ENCODE measurements at regions of chr16 and their contacts with region 1.

Region 1: DNA sequence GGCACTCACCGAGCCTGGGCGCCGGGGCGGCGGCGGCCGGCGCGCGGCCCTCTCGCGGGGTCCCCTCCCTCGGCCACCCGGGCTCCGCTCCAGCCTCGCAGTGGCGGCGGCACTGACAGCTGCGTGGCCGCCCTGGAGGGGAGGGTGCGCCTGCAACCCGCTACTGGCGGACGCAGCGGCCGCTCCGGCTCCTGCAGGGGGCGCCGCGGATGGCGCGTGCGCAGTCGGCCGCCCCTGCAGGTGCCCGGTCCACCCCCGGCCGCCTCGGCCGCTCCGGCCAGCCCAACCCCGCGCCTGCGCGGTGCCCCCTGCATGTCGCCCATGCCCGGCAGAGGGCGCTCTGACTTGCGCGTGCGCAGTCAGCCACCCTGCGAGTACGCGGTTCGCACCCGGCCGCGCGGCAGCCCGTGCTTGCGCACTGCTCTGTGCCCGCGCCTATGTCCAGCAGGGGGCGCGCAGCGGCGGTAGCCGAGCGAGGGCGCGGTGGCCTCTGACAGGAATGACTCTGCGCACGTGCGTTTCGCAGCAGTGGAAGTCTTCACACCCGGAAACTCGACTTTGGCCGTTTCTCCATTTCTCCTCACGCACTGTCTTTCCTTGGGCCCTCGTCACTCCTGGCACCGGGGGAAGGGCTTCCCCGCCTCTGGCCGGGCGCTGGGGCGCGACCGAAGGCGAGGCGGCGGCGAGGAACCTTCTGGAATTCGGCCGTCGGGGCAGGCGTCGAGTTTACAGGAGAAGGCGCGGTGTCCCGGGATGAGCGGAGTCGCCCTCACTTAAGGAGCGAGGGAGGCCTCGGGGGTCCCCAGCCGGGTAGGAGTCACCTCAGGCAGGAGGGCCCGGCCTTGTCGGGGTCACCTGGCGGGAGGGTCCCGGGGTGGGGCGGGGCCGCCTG is at the start of gene ABCA3:
- DNase-seq: peak; percentile 100
- H3K4me3 Mint-ChIP-seq: peak within 1 kb of the TSS; percentile 93
- H3K27ac Mint-ChIP-seq: peak within 1 kb of the TSS; percentile 82
- H3K4me1 Mint-ChIP-seq: peaks cover 16% of the 10 kb centered on the region
- H3K27me3 Mint-ChIP-seq: peaks cover 32% of the 10 kb centered on the region
- total RNA-seq, gene ABCA3: 8.3 and 9.2 TPM in 2 replicates

Region 2: GRCh38 chr16:2422123-2422867 is 81.5 kb after region 1 on chr16:
- intact Hi-C with region 1: loop called (anchors 2 kb)
- DNase-seq: no peak
- H3K4me3 Mint-ChIP-seq: no peak overlapping the region
- H3K27ac Mint-ChIP-seq: no peak overlapping the region
- H3K4me1 Mint-ChIP-seq: peaks cover 6% of the 10 kb centered on the region
- H3K27me3 Mint-ChIP-seq: peaks cover 6% of the 10 kb centered on the region

Region 3: GRCh38 chr16:2486645-2487516 is 146.1 kb after region 1 on chr16:
- intact Hi-C with region 1: loop called (anchors 5 kb)
- DNase-seq: peak; percentile 90
- H3K4me3 Mint-ChIP-seq: peak overlapping the region; percentile 65
- H3K27ac Mint-ChIP-seq: peak overlapping the region; percentile 69
- H3K4me1 Mint-ChIP-seq: peaks cover 13% of the 10 kb centered on the region
- H3K27me3 Mint-ChIP-seq: no peaks in the 10 kb centered on the region

Region 4: DNA sequence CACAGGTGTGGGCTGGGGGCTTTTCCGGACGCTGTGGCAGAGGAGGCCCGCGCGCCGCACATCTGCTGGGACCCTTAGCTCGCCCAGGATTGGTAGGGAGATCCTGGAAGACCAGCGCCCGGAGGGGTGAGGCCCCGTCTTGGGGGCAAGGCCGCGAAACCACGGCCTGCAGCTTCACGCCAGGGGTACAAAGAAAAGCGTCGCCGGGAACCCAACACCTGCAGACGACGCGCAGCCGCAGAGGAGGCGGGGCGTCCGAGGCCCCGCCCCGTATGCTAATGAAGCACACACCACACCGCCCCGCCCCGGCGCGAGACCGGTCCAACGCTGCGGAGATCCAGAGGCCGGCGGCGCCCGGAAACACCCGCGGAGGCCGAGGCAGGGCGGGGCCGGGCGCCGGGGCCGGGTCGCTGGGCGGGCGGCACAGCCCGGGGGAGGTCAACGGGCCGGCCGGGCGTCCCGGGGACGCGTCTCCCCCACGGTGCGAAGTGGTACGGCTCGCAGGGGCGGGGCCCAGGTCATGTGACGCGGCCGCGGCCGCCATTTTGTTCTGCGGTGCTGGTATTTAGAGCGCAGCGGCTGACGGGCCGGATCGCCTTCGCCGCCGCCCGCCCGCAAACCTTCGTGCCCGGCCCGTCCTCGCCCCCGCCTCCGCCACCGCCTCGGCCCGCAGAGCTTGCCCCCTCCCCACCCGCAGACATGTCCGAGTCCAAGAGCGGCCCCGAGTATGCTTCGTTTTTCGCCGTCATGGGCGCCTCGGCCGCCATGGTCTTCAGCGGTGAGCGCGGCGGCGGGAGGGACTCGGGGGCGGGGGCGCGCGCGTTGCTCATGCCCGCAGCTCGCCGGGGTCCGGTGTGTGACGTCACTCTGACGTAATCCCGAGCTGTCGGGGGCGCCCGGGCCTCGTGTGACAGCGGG is 172.9 kb after region 1 on chr16 and contains the start of gene ATP6V0C:
- intact Hi-C with region 1: no loop called
- DNase-seq: peak; percentile 98
- H3K4me3 Mint-ChIP-seq: peak within 1 kb of the TSS; percentile 94
- H3K27ac Mint-ChIP-seq: peak within 1 kb of the TSS; percentile 97
- H3K4me1 Mint-ChIP-seq: peaks cover 38% of the 10 kb centered on the region
- H3K27me3 Mint-ChIP-seq: peaks cover 6% of the 10 kb centered on the region
- total RNA-seq, gene ATP6V0C: 105 and 122 TPM in 2 replicates